Activated T-helper 1 cell treated with anti-CD3 and anti-CD28 coated beads, Interleukin-12 subunit alpha, Interleukin-12 subunit beta, Interleukin-2, Interleukin-4 antibody, amounts not matched to agents 30 ng/mL and 10 ng/mL and 1 ng/mL, durations not matched to agents 14 hours and 24 hours and 36 hours (primary cell): ENCODE measurements at regions of chr4 and their contacts with region 1.

Region 1: GRCh38 chr4:38856524-38857337 is at the start of gene TLR6:
- DNase-seq: peak; percentile 65
- H3K4me3 Mint-ChIP-seq: peak within 1 kb of the TSS; percentile 88
- H3K27ac Mint-ChIP-seq: peak within 1 kb of the TSS; percentile 88
- H3K4me1 Mint-ChIP-seq: peaks cover 50% of the 10 kb centered on the region
- H3K27me3 Mint-ChIP-seq: no peaks in the 10 kb centered on the region
- total RNA-seq, gene TLR6: 1.3 and 1.7 TPM in 2 replicates

Region 2: DNA sequence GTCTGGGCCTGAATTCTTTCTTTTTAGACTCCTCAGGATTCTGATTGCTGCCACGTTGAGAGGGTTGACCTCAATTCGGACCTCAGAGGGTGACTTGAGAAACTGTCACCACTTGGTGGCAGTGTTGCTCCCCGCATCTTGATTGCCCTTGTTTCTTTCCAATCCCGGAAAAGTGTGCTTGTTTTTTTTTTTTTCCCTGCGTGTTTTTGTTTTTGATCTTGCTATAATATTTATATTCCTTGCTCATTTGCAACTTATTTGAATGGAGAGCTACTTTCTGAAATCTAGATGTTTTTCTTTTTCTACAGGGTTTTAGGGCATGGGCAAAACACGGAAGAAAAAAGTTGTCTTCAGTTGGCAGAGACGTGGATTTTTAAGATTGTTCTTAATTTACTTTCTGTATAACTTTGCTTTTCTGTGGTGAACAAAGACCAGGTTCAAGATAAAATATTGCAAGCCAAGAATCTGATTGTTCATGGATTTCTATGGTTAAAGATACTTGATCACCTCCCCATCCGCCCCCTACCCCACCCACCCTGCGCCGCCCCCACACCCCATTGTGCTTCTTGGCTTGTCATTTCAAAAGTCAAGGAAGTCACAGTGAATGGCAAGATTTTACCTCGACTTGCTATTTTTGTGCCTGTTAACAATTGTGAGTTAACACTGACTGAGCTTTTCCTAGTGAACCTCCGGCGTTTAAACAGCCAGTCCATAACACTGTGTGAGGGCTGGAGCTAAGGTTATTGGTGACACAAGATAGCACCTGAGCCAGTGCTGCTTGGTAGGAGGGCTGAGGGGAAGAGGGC is 794.4 kb before region 1 on chr4:
- intact Hi-C with region 1: loop called (anchors 2 kb)
- DNase-seq: peak; percentile 42
- H3K4me3 Mint-ChIP-seq: peak overlapping the region; percentile 83
- H3K27ac Mint-ChIP-seq: peak overlapping the region; percentile 69
- H3K4me1 Mint-ChIP-seq: peaks cover 16% of the 10 kb centered on the region
- H3K27me3 Mint-ChIP-seq: no peaks in the 10 kb centered on the region

Region 3: DNA sequence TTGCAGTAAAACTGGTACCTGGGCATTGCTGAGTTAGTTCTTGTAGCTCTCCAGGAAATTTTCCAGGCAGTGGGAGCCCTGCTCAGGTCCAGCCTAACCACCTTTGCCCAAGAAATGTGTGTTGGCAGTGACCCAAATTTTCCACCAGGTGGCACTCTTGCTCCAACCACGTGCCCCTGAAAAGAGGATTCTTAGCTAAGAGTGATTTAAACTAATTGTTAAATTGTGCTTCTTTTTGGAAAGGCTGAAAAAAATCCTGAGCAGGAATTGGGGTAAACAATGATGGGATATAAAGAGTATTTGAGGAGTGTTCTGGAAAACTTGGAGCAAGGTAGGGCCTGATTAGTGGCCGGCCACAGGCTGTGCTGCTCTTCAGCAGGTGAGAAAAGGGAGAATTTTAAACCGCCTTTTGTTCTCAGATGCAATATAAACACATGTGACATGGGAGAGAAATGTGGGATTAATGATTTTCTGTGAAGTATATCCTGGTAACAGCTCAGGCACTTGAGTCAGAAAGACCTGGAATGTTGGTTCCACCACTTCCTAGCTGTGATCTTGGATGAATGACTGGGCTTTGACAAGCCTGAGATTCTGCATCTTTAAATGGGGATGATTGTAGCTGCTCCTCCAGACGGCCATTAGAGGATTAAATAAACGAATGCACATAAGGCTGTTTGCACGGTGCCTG is 676.9 kb before region 1 on chr4:
- intact Hi-C with region 1: loop called (anchors 1 kb)
- DNase-seq: peak; percentile 59
- H3K4me3 Mint-ChIP-seq: no peak overlapping the region
- H3K27ac Mint-ChIP-seq: no peak overlapping the region
- H3K4me1 Mint-ChIP-seq: peaks cover 54% of the 10 kb centered on the region
- H3K27me3 Mint-ChIP-seq: peaks cover 11% of the 10 kb centered on the region

Region 4: DNA sequence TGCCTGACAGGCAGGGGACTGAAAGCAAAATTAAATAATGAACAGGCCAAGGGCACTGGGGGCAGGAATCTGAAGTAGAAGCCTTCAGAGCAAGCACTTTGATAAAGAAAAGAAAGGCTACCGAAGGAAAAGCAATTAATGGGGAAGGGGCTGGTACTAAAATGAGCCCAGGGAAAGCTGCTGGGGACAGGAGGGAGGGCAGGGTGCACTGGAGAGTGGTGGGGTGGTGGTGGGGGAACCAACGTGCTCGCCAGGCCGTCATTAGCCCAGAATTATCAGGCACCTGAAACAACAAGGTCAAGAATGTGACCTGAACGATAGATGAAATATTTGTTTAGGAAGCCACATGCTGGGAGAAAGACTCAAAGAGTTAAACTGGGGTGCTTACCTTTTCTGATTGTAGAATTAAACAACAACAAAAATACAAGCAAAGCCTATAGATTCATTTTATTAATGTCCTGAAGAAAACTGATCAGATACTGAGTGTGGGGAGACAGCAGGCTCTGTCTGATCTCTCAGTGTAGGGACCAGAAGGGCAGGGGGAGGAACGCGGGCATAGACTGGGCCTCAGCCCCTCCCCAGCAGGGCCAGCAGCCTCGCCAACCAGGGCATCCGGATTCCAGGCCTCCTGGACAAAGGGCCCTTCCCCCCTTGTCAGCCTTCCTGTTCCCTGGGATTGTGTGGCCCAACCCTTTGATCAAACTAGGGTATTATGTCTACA is 432.4 kb before region 1 on chr4:
- intact Hi-C with region 1: no loop called
- DNase-seq: no peak
- H3K4me3 Mint-ChIP-seq: no peak overlapping the region
- H3K27ac Mint-ChIP-seq: no peak overlapping the region
- H3K4me1 Mint-ChIP-seq: no peaks in the 10 kb centered on the region
- H3K27me3 Mint-ChIP-seq: peaks cover 26% of the 10 kb centered on the region

Region 5: DNA sequence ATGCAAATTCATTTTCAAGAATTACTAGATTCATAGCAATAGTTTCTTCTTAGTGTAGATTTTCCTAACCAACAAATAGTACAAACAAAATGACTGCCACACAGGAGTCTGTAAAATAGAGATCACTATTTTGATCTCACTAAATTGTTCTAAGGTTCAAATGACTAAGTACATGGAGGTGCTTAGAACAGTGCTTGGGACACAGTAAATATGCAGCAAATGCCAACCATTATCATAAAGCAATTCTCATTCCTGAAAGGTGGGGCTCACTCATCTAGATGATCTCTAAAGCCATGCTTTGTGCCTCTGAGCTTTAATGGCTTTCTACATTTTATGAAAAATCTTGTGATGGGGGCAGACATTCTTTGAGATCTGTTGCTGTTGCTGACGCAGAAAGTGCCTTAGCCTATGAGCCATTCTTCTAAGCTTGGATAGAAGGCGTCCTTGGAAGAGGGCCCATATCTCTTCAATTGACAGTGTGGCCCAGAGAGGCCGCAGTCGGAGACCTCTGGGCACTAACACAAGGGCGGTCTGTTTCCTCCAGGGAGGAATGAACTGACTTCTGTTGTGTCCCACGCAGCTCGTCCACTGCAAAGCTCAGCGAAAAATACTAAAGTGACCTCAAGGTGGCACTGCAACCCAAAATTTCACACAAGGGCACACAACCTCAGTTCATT is 97.5 kb before region 1 on chr4:
- intact Hi-C with region 1: loop called (anchors 1 kb)
- DNase-seq: peak; percentile 34
- H3K4me3 Mint-ChIP-seq: no peak overlapping the region
- H3K27ac Mint-ChIP-seq: no peak overlapping the region
- H3K4me1 Mint-ChIP-seq: peaks cover 29% of the 10 kb centered on the region
- H3K27me3 Mint-ChIP-seq: no peaks in the 10 kb centered on the region

Region 6: DNA sequence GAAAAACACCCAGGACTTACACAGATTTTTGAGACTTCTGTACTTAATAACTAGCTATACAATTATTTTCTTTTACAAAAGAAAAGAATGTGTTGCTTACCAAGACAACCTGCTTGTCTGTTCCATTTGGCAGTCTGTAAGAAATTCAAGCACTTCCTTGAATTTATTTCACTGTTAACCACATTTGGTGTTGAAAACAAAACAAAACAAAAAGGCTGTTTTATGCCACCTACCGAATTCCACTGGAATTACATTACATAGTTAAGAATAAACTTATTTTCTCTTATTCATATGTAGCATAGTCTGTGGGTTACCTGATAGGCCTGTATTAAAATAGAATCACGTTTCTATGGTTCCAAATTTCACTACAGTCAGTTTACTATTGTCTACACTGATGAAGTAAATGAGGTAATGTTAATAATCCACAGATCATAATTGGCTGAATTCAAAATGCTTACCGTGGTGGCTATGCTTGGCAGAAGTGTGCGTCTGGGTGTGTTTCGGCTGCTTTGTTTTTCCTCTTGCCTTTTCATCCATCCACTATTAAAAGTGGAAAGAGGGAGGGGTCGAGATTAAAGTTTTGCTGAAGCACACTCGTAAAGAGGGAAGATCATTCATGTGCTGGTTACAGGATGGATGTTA is 52.0 kb before region 1 on chr4 and contains the start of gene TLR1:
- intact Hi-C with region 1: loop called (anchors 1 kb)
- DNase-seq: no peak
- H3K4me3 Mint-ChIP-seq: peak within 1 kb of the TSS; percentile 81
- H3K27ac Mint-ChIP-seq: peak within 1 kb of the TSS; percentile 87
- H3K4me1 Mint-ChIP-seq: peaks cover 38% of the 10 kb centered on the region
- H3K27me3 Mint-ChIP-seq: no peaks in the 10 kb centered on the region
- total RNA-seq, gene TLR1: 1.9 and 2.7 TPM in 2 replicates

Region 7: GRCh38 chr4:38889143-38889542 is 32.4 kb after region 1 on chr4:
- intact Hi-C with region 1: loop called (anchors 1 kb)
- DNase-seq: no peak
- H3K4me3 Mint-ChIP-seq: peak overlapping the region; percentile 63
- H3K27ac Mint-ChIP-seq: peak overlapping the region; percentile 91
- H3K4me1 Mint-ChIP-seq: peaks cover 41% of the 10 kb centered on the region
- H3K27me3 Mint-ChIP-seq: no peaks in the 10 kb centered on the region

Region 8: GRCh38 chr4:39181905-39182638 is 325.3 kb after region 1 on chr4 and contains the start of gene WDR19:
- intact Hi-C with region 1: loop called (anchors 5 kb)
- DNase-seq: peak; percentile 98
- H3K4me3 Mint-ChIP-seq: no peak within 1 kb of the TSS
- H3K27ac Mint-ChIP-seq: no peak within 1 kb of the TSS
- H3K4me1 Mint-ChIP-seq: no peaks in the 10 kb centered on the region
- H3K27me3 Mint-ChIP-seq: peaks cover 15% of the 10 kb centered on the region
- total RNA-seq, gene WDR19: 12.6 and 13.7 TPM in 2 replicates